PC-3 (cell line): ENCODE measurements at regions of chrX and their contacts with region 1.

Region 1: DNA sequence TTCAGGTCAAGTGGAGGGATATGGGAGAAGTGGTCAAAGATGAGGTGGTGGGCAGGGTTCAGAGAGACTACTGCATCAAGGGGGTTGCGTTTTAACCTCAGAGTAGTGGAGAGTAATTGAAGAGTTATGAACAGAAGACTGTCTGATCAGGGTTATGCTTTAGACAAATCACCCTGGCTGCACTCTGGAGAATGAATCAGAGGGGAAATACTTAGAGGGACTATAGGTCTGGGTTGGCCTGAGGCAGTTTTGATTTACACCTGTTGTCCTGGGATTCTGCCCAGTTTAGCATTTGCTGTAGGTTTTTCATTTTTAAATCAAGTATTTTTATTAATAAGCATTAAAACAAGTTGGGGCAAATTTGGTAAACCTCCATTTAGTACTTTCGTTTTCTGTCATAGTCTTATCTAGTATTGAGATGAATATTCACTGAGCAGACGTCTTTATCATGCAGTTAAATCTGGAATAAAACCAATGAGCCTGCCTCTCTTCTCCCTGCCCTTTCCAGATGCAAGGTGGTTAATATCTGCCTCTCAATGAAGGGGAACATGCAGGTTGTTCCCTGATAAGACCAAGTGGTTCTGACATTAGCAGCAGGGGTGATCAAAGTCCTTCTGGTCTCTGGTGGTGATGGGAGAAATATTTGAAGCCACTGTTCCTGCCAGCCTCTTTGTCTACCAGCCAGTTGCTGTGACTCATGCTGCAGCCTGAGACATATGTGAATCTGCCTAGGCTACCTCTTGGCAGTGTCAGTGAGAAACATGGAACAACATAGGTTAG is 116.0 kb upstream of the RPS6KA3 start:
- DNase-seq: peak; percentile 60
- ATAC-seq: peak; percentile 62
- H3K4me3 ChIP-seq: no peak overlapping the region
- H3K27ac ChIP-seq: no peak overlapping the region
- H3K4me1 ChIP-seq: peaks cover 26% of the 10 kb centered on the region
- H3K27me3 ChIP-seq: no peaks in the 10 kb centered on the region
- CTCF ChIP-seq: no peak

Region 2: GRCh38 chrX:20252381-20253231 is 130.1 kb before region 1 on chrX:
- CTCF ChIA-PET with region 1: no interaction called
- POLR2A ChIA-PET with region 1: no interaction called
- intact Hi-C with region 1: loop called (anchors 5 kb)
- DNase-seq: peak; percentile 81
- ATAC-seq: peak; percentile 80
- H3K4me3 ChIP-seq: no peak overlapping the region
- H3K27ac ChIP-seq: no peak overlapping the region
- H3K4me1 ChIP-seq: peaks cover 29% of the 10 kb centered on the region
- H3K27me3 ChIP-seq: no peaks in the 10 kb centered on the region
- CTCF ChIP-seq: peak; percentile 75

Region 3: GRCh38 chrX:20266810-20267606 is 115.7 kb before region 1 on chrX and contains the start of gene RPS6KA3:
- CTCF ChIA-PET with region 1: no interaction called
- POLR2A ChIA-PET with region 1: no interaction called
- intact Hi-C with region 1: loop called (anchors 5 kb)
- DNase-seq: peak; percentile 82
- ATAC-seq: peak; percentile 72
- H3K4me3 ChIP-seq: peak within 1 kb of the TSS; percentile 84
- H3K27ac ChIP-seq: peak within 1 kb of the TSS; percentile 67
- H3K4me1 ChIP-seq: peaks cover 49% of the 10 kb centered on the region
- H3K27me3 ChIP-seq: no peaks in the 10 kb centered on the region
- CTCF ChIP-seq: no peak
- total RNA-seq, gene RPS6KA3: 22.8 and 24.6 TPM in 2 replicates

Region 4: GRCh38 chrX:20320461-20321159 is 62.1 kb before region 1 on chrX:
- CTCF ChIA-PET with region 1: no interaction called
- POLR2A ChIA-PET with region 1: no interaction called
- intact Hi-C with region 1: loop called (anchors 1 kb)
- DNase-seq: peak; percentile 52
- ATAC-seq: peak; percentile 83
- H3K4me3 ChIP-seq: peak overlapping the region; percentile 61
- H3K27ac ChIP-seq: peak overlapping the region; percentile 62
- H3K4me1 ChIP-seq: peaks cover 18% of the 10 kb centered on the region; the same call in 1 of the 2 replicates
- H3K27me3 ChIP-seq: no peaks in the 10 kb centered on the region
- CTCF ChIP-seq: no peak

Region 5: DNA sequence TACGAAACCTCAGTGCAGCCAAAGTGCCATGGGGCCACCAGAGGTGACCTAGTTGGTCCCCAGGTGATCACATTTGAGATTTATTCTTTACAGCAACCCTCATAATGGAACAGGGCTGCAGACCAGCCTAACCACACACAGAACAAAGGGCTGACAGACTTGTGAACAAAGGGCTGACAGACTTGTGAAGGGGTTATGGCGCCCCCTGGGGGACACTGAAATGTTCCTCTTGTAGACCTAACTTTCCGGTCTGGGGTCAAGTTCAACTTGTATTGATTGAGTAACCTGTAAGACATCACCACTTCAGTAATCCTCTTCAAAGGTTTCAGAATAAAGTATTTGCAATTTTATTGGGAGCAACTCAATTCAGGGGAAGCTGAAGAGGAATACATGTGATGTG is 59.9 kb after region 1 on chrX:
- CTCF ChIA-PET with region 1: no interaction called
- POLR2A ChIA-PET with region 1: no interaction called
- intact Hi-C with region 1: loop called (anchors 10 kb)
- DNase-seq: peak; percentile 86
- ATAC-seq: peak; percentile 74
- H3K4me3 ChIP-seq: no peak overlapping the region
- H3K27ac ChIP-seq: no peak overlapping the region
- H3K4me1 ChIP-seq: peaks cover 3% of the 10 kb centered on the region; the same call in 1 of the 2 replicates
- H3K27me3 ChIP-seq: no peaks in the 10 kb centered on the region
- CTCF ChIP-seq: peak; percentile 80